ENCODE measurements at regions of chr1 and their contacts with region 1.

Region 1: DNA sequence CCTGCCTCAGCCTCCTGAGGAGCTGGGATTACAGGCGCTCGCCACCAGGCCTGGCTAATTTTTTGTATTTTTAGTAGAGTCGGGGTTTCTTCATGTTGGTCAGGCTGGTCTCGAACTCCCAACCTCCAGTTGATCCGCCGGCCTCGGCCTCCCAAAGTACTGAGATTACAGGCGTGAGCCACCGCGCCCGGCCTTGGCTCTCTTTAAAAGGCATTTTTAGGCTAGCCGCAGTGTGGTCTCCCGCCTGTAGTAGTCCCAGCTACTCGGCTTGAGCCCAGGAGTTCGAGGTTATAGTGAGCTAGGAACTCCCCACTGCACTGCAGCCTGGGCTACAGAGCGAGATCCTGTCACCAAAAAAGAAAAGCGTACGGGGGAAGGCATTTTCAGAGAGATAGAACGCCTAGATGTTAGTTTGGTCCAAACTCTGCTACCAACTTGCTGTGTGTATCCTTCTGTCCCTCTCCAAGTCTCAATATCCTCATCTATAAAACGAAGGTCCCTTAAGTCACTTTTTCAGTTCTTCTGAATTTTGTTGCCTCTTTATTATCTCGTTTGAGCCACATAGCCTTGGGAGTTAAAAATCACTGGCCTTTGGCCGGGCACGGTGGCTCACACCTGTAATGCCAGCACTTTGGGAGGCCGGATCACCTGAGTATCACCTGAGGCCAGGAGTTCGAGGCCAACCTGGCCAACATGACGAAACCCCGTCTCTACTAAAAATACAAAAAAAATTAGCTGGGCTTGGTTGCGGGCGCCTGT is 734 bp downstream of the MED18 start:
- DNase-seq: peak in 3 of 10 donors; percentile 10 to 44 (median 32)
- H3K4me3 ChIP-seq: peak overlapping the region; percentile 53 to 91 (median 76)
- H3K27ac ChIP-seq: peak overlapping the region; percentile 17 to 94 (median 88)
- H3K27me3 ChIP-seq: no peaks in the 10 kb centered on the region
- CTCF ChIP-seq: no peak

Region 2: DNA sequence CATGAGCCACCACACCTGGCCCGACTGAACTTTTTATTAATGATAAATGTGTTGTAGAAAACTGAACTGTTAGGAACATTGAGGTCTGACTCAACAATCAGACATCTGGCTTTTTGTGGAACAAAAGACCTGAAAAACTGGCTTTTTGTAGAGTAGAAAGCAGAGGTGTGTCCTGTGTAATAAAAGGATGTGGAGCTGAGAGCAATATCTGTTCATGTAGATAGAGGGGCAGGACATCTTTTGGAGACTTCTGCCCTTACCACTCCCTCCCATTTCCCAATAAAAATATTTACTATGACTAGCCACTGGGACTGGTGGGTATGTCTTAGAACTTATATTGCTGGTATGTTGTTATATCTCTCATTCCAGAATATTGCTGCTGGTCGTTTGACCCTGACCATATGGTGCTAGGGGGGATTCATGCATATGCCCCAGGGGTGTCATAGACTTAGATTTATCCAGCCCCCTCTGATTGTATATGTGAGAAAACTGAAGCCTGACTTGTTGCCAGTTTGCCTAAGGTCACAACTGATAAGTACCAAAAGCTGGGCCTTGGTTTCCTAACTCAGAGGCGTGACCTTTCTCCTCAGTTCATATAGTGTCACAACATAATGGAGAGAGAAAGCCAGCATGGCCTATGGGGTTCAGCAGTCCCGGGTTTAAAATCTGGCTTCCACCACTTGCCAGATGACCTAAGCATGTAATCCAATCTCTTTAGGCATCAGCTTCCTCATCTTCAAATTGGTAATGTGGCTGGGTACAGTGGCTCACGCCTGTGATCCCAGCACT is 1575.3 kb before region 1 on chr1:
- intact Hi-C with region 1: no loop called
- DNase-seq: no peak
- H3K4me3 ChIP-seq: no peak overlapping the region
- H3K27ac ChIP-seq: peak overlapping the region in 10 of 59 donors; percentile 15 to 54 (median 42)
- H3K27me3 ChIP-seq: no peaks in the 10 kb centered on the region
- CTCF ChIP-seq: no peak

Region 3: GRCh38 chr1:28235755-28236655 is 93.6 kb before region 1 on chr1 and contains the start of gene ATP5IF1:
- intact Hi-C with region 1: loop called in 1 of 2 experiments (anchors 5 kb)
- DNase-seq: peak; percentile 91 to 99 (median 99)
- H3K4me3 ChIP-seq: peak within 1 kb of the TSS; percentile 60 to 100 (median 95)
- H3K27ac ChIP-seq: peak within 1 kb of the TSS; percentile 65 to 98 (median 93)
- H3K27me3 ChIP-seq: no peaks in the 10 kb centered on the region
- CTCF ChIP-seq: peak in 19 of 56 donors; percentile 7 to 48 (median 20)
- total RNA-seq, gene ATP5IF1: 83.1 to 262 (median 175) TPM

Region 4: GRCh38 chr1:28259307-28260167 is 70.0 kb before region 1 on chr1 and contains the start of gene SESN2:
- intact Hi-C with region 1: loop called (anchors 2 to 5 kb)
- DNase-seq: peak; percentile 99 to 100 (median 99)
- H3K4me3 ChIP-seq: peak within 1 kb of the TSS; percentile 68 to 100 (median 95)
- H3K27ac ChIP-seq: peak within 1 kb of the TSS in 55 of 59 donors; percentile 41 to 94 (median 82)
- H3K27me3 ChIP-seq: no peaks in the 10 kb centered on the region
- CTCF ChIP-seq: peak in 35 of 56 donors; percentile 10 to 64 (median 31)
- total RNA-seq, gene SESN2: 6.5 to 26.1 (median 11.8) TPM

Measured in dorsolateral prefrontal cortex (tissue), 120 donors.